ENCODE measurements at regions of chr11 and their contacts with region 1.

Region 1: DNA sequence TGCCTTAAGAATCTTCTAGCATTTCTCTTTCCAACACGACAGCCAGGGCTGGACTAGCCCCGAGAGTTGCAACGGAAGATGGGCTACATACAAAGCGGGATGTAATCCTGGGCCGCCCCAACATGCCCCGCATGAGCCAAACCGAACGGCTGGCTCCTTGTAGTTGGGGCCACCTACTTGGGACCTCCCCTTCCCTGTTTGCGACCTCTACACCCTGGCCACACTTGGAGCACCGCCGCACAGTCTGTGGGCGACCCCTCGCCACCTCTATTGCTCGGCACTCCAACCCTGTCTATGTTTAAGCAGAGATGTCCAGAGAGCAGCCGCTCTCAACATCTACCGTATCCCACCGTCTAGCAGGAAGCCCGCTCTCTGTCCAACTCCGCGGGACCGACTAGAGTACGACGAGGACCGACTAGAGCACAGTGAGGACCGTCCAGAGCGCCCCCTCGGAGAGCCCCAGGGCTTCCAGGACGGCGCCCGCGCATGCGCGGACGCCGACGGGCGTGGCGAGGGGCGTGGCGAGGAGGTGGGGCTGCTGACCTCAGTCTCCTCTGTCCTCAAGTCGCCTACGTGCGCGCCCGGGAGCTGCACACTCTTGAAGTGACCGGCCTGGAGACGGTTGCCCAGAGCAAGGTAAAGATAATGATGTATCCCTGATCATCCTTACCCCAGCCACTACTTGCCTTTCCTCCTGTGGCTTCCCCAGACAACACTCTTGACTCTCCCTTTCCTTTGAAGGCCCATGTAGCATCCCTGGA is 32.3 kb downstream of the NEAT1 start:
- DNase-seq: peak; percentile 82
- H3K4me3 Mint-ChIP-seq: peak overlapping the region; percentile 95
- H3K27ac Mint-ChIP-seq: peak overlapping the region; percentile 81
- H3K4me1 Mint-ChIP-seq: peaks cover 36% of the 10 kb centered on the region
- H3K27me3 Mint-ChIP-seq: peaks cover 2% of the 10 kb centered on the region

Region 2: DNA sequence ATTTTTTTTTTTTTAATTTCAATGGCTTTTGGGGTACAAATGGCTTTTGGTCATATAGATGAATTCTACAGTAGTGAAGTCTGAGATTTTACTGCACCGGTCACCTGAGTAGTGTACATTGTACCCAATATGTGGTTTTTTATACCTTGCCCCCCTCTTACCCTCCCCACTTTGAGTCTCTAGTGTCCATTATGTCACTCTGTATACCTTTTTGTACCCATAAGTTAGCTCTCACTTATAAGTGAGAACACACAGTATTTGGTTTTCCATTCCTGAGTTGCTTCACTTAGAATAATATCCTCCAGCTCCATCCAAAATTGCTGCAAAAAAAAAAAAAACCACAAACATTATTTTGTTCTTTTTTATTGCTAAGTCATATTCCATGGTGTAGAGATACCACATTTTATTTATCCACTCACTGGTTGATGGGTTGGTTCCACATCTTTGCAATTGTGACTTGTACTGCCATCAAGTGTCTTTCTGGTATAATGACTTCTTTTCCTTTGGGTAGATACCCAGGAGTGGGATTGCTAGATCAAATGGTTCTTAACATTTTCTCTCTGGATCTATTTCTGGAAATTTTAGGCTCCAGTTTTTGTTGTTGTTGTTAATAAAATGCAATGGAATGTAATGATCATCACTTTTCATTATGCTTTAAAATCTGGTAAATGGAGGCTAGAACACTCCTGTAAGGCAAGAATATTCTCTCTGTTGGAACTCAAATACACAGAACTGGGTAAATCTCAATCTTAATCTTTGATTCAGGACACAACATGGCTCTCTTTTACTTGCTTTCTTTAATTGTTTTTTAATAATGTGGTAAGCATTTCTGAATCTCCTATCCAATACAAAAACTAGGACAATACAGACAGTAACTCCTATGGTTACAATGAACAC is 21.9 kb before region 1 on chr11:
- intact Hi-C with region 1: loop called (anchors 2 kb)
- DNase-seq: no peak
- H3K4me3 Mint-ChIP-seq: peak overlapping the region; percentile 45
- H3K27ac Mint-ChIP-seq: peak overlapping the region; percentile 75
- H3K4me1 Mint-ChIP-seq: peaks cover 91% of the 10 kb centered on the region
- H3K27me3 Mint-ChIP-seq: no peaks in the 10 kb centered on the region

Region 3: GRCh38 chr11:65440831-65441499 is 13.9 kb before region 1 on chr11:
- intact Hi-C with region 1: loop called (anchors 1 kb)
- DNase-seq: no peak
- H3K4me3 Mint-ChIP-seq: peak overlapping the region; percentile 22
- H3K27ac Mint-ChIP-seq: peak overlapping the region; percentile 91
- H3K4me1 Mint-ChIP-seq: peaks cover 62% of the 10 kb centered on the region
- H3K27me3 Mint-ChIP-seq: peaks cover 2% of the 10 kb centered on the region

Region 4: DNA sequence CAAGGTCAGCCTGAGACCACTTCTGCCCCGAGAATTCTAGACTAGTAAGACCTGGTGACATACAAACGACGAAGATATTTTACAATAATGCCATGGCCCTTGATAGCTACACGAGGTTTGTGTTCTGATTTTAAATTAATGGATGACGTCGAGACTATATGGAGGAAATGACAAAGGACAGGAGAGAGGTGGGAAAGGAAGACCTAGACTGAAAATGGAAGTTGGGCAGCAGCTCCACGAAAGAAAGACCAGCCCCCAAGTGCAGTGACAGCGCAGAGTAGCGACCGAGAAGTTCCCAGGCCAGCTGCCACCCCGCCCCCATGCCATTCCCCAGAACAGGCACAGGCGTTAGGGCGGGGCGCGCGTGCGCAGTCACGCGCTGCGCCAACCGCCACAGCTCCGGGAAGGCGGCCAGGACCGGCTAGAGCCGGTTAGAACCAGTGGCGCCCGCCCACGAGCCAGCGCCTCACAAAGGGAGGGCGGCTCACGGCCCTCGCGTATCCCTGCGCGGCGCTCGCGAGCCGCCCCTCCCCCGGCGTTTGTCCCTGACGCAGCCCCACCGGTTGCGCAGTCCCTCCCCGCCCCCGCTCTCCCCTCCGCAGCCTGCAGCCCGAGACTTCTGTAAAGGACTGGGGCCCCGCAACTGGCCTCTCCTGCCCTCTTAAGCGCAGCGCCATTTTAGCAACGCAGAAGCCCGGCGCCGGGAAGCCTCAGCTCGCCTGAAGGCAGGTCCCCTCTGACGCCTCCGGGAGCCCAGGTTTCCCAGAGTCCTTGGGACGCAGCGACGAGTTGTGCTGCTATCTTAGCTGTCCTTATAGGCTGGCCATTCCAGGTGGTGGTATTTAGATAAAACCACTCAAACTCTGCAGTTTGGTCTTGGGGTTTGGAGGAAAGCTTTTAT is 42.5 kb after region 1 on chr11:
- intact Hi-C with region 1: loop called (anchors 1 kb)
- DNase-seq: peak; percentile 98
- H3K4me3 Mint-ChIP-seq: no peak overlapping the region
- H3K27ac Mint-ChIP-seq: no peak overlapping the region
- H3K4me1 Mint-ChIP-seq: peaks cover 37% of the 10 kb centered on the region
- H3K27me3 Mint-ChIP-seq: no peaks in the 10 kb centered on the region

Region 5: DNA sequence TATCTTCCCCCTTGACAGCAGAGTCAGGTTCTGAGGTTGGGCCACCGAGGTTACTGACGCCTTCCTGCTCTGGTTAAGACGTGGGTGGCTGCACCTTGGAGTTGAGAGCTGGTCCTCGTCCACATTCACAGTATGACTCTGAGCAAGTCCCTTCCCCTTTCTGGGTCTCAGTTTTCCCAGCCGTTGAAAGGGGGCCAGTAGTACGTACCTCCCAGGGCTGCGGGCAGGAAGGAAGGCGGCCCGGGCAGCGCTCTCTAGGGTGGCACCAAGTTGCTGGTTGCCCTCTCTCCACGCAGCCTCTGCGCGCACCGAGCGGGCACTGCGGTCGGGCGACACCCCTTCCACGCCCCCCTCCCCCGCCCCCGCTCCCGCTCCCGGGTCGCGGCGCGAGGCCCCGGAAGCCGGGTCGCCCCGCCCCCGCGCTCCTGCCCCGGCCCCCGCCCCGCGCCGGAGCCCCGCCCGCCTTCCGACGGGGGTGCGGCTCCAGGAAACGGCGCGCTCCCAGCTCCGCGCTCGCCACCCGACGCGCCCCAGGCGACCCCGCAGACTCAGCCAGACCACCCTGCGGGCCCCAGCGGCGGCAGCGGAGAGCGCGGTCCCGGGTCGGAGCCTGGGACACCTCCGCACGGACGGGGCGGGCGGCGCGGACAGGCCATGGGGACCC is 120.8 kb after region 1 on chr11 and contains the start of gene EHBP1L1:
- intact Hi-C with region 1: no loop called
- DNase-seq: peak; percentile 76
- H3K4me3 Mint-ChIP-seq: peak within 1 kb of the TSS; percentile 92
- H3K27ac Mint-ChIP-seq: peak within 1 kb of the TSS; percentile 88
- H3K4me1 Mint-ChIP-seq: peaks cover 48% of the 10 kb centered on the region
- H3K27me3 Mint-ChIP-seq: no peaks in the 10 kb centered on the region
- total RNA-seq, gene EHBP1L1: 168 and 178 TPM in 2 replicates